Left colon (tissue), 2 donors: ENCODE measurements at regions of chr16 and their contacts with region 1.

Region 1: GRCh38 chr16:63856537-63856936 is 1265.3 kb downstream of the CDH11 start:
- DNase-seq: no peak
- ATAC-seq: no peak

Region 2: GRCh38 chr16:63403793-63404192 is 452.7 kb before region 1 on chr16:
- intact Hi-C with region 1: no loop called
- DNase-seq: no peak
- ATAC-seq: no peak

Region 3: DNA sequence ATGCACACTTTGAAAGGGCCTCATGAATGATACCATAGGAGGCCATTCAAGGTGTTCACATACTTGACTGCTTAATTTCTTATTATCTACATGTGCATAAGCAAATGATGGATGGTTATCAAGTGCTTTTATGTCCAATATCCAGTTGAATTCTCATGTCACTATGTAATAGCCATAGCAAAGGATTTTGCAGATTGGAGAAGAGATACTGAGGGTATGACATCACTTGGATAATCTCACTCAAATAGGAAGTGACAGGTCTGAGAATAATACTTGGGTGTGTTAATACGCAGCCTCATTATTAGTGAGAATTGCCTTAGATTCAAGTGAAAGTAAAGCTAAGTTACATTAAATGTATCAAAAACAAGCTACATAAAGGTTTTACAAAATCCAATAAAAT is 56.8 kb after region 1 on chr16:
- intact Hi-C with region 1: loop called in 1 of 2 experiments (anchors 10 kb)
- DNase-seq: no peak
- ATAC-seq: no peak

Region 4: GRCh38 chr16:64144617-64145016 is 288.1 kb after region 1 on chr16:
- intact Hi-C with region 1: no loop called
- DNase-seq: no peak
- ATAC-seq: no peak